T-cell (primary cell): ENCODE measurements at regions of chr9 and their contacts with region 1.

Region 1: GRCh38 chr9:90102292-90102901 is 497.6 kb downstream of the GADD45G start:
- DNase-seq: peak; percentile 38 to 87 (median 73)
- ATAC-seq: peak; percentile 97 to 100 (median 98)
- H3K4me3 ChIP-seq: no peak overlapping the region
- H3K4me3 Mint-ChIP-seq: no peak overlapping the region
- H3K27ac ChIP-seq: no peak overlapping the region
- H3K27ac Mint-ChIP-seq: no peak overlapping the region
- H3K4me1 ChIP-seq: peaks cover 5 to 7% of the 10 kb centered on the region in 2 experiments
- H3K4me1 Mint-ChIP-seq: peaks cover 0 to 6% (median 6%) of the 10 kb centered on the region in 3 donors
- H3K27me3 ChIP-seq: peaks cover 0 to 12% of the 10 kb centered on the region in 2 experiments
- H3K27me3 Mint-ChIP-seq: peaks cover 0 to 2% of the 10 kb centered on the region in 2 donors

Region 2: GRCh38 chr9:89597711-89598625 is 504.4 kb before region 1 on chr9:
- CTCF ChIA-PET with region 1: interaction called, 13 to 72 read pairs
- POLR2A ChIA-PET with region 1: no interaction called
- DNase-seq: peak in 18 of 35 experiments; percentile 14 to 78 (median 39)
- ATAC-seq: peak in 2 of 4 experiments; percentile 45 to 47
- H3K4me3 ChIP-seq: no peak overlapping the region
- H3K4me3 Mint-ChIP-seq: no peak overlapping the region
- H3K27ac ChIP-seq: no peak overlapping the region
- H3K27ac Mint-ChIP-seq: no peak overlapping the region
- H3K4me1 ChIP-seq: peaks cover 0 to 3% of the 10 kb centered on the region in 2 experiments
- H3K4me1 Mint-ChIP-seq: peaks cover under 1% of the 10 kb centered on the region in 3 donors
- H3K27me3 ChIP-seq: peaks cover 0 to 36% of the 10 kb centered on the region in 2 experiments
- H3K27me3 Mint-ChIP-seq: peaks cover 0 to 10% of the 10 kb centered on the region in 2 donors